ENCODE measurements at regions of chr2 and their contacts with region 1.

Region 1: GRCh38 chr2:25606892-25607291 is 66.5 kb downstream of the DTNB start:
- DNase-seq: no peak
- H3K4me3 ChIP-seq: no peak overlapping the region
- H3K27me3 ChIP-seq: no peaks in the 10 kb centered on the region
- CTCF ChIP-seq: peak; percentile 49

Region 2: DNA sequence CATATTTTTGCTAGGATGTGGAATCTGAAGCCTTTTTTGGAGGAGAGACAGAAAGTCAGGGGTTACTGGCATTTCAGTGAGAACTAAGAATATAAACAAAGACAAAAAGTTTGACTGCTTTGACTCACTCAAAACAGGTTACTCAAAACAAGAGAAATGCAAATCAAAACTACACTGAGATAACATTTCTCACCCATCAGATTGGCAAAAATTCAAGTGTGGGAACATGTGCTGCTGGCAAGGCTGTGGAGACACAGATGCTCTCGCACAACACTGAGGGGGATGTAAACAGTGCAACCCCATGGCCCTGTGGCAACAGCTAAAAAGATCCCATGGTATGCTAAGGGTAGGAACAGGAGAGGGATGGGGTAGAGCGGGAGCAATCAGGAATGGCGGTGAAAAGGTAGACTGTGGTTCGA is 20.2 kb before region 1 on chr2:
- CTCF ChIA-PET with region 1: no interaction called
- POLR2A ChIA-PET with region 1: no interaction called
- DNase-seq: no peak
- H3K4me3 ChIP-seq: no peak overlapping the region
- H3K27me3 ChIP-seq: no peaks in the 10 kb centered on the region
- CTCF ChIP-seq: no peak

Region 3: DNA sequence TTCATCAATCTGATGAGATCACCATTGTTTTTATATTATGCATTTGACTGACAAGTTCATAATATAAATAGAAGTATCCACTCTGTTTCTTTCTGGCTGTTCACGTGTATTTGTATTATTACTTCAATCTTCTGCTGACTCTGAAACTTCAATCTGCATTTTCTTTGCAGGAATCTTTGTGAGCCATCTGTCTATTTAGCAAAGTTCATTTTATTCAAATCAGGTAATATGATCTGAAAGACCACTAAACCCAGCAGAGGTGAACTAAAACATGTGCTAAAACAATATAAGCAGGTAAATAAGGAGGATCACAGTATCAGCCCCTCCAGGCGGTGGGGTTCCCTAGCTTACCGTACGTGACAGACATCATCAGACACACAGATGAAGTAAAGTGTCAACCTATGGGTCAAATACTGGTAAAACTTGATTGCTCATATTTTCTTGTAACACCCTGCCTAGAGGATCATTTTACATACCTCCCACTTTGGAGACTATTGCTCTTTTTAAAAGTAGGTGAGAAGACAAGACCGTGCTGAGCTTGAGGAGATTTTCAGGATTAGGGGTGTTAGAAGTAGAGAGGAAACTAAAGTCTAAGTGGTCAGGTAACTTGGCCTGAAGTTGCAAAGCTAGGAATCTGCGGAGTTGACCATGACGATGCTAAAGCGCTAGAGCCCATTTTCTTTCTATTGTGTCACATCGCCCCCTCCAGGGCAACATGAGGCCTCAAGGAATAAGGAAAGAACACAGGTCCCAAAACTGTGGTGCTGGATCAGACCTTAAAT is 57.5 kb after region 1 on chr2:
- CTCF ChIA-PET with region 1: interaction called, 38 read pairs
- POLR2A ChIA-PET with region 1: no interaction called
- DNase-seq: no peak
- H3K4me3 ChIP-seq: no peak overlapping the region
- H3K27me3 ChIP-seq: no peaks in the 10 kb centered on the region
- CTCF ChIP-seq: peak; percentile 68

Measured in BJ (cell line).